ENCODE measurements at regions of chr1 and their contacts with region 1.

Region 1: GRCh38 chr1:188782219-188782841 is 1695.3 kb downstream of the BRINP3 start:
- DNase-seq: peak; percentile 51
- ATAC-seq: peak; percentile 84
- H3K4me3 ChIP-seq: no peak overlapping the region
- H3K27ac ChIP-seq: no peak overlapping the region
- H3K4me1 ChIP-seq: no peaks in the 10 kb centered on the region
- H3K27me3 ChIP-seq: no peaks in the 10 kb centered on the region
- CTCF ChIP-seq: peak; percentile 52
- POLR2A ChIP-seq: no peak
- RAD21 ChIP-seq: peak; percentile 58

Region 2: GRCh38 chr1:188769181-188769580 is 13.1 kb before region 1 on chr1:
- CTCF ChIA-PET with region 1: interaction called, 11 read pairs
- POLR2A ChIA-PET with region 1: no interaction called
- dilution Hi-C with region 1: no loop called
- in situ Hi-C with region 1: no loop called
- intact Hi-C with region 1: no loop called
- DNase-seq: no peak
- ATAC-seq: no peak
- H3K4me3 ChIP-seq: no peak overlapping the region
- H3K27ac ChIP-seq: no peak overlapping the region
- H3K4me1 ChIP-seq: no peaks in the 10 kb centered on the region
- H3K27me3 ChIP-seq: no peaks in the 10 kb centered on the region
- CTCF ChIP-seq: no peak
- POLR2A ChIP-seq: no peak
- RAD21 ChIP-seq: no peak

Region 3: DNA sequence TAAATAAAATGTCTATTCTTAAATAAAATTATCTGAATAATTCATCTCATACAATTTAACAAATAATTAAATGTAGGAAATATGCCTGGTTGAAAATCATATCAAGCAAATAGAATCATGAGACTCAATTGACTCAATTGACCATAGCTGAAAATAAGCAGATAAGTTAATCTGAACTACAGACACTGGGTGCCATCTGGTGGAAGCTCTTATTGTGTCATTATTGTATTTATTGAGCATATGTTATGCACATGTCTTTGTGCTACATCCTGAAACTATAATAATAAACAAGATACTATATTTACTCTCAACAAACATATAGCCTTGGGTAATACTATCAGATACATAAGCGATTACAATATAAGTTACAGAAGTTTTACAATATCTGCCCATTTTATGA is 1654.3 kb after region 1 on chr1:
- CTCF ChIA-PET with region 1: no interaction called
- POLR2A ChIA-PET with region 1: no interaction called
- dilution Hi-C with region 1: no loop called
- in situ Hi-C with region 1: no loop called
- intact Hi-C with region 1: loop called (anchors 5 kb)
- DNase-seq: peak; percentile 63
- ATAC-seq: peak; percentile 54; the same call in 1 of the 2 replicates
- H3K4me3 ChIP-seq: no peak overlapping the region
- H3K27ac ChIP-seq: no peak overlapping the region
- H3K4me1 ChIP-seq: no peaks in the 10 kb centered on the region
- H3K27me3 ChIP-seq: no peaks in the 10 kb centered on the region
- CTCF ChIP-seq: peak; percentile 60
- POLR2A ChIP-seq: no peak
- RAD21 ChIP-seq: peak; percentile 71